ENCODE measurements at regions of chr13 and their contacts with region 1.

Region 1: DNA sequence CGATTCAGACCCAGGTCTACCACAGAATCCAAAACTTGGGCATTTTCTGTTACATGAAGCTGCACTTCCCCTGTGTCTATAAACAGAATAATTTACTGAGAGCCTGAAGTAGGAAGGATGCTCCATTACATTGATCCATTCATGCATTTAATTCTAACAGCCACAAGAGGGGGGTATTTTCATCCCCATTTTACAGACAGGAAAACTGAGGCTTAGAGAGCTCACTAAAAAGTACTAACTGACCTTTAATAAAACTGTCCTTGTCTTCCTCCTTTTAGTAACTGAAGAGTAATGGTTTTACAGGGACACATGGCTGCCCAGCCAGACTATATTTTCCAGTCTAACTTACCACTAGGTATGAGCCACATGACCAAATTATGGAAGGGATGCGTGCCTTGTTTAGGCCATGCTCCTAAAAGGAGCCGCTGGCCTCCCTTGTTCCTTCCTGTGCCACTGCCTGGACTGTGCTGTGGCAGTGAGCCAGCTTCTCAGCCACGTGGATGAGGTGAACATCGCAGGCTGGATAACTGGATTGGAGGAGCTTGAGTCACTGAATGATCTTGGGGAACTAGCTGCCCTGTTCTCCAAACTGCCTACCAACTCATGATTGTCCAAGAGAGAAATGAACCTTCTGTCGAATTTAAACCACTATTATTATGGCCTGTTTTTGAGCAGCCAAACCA is 108.3 kb downstream of the DOCK9 start:
- DNase-seq: no peak
- H3K4me3 Mint-ChIP-seq: no peak overlapping the region
- H3K27ac Mint-ChIP-seq: no peak overlapping the region
- H3K4me1 Mint-ChIP-seq: peaks cover 21% of the 10 kb centered on the region
- H3K27me3 Mint-ChIP-seq: no peaks in the 10 kb centered on the region

Region 2: GRCh38 chr13:98685146-98685545 is 184.4 kb before region 1 on chr13:
- intact Hi-C with region 1: no loop called
- DNase-seq: no peak
- H3K4me3 Mint-ChIP-seq: no peak overlapping the region
- H3K27ac Mint-ChIP-seq: no peak overlapping the region
- H3K4me1 Mint-ChIP-seq: no peaks in the 10 kb centered on the region
- H3K27me3 Mint-ChIP-seq: peaks cover 15% of the 10 kb centered on the region

Region 3: DNA sequence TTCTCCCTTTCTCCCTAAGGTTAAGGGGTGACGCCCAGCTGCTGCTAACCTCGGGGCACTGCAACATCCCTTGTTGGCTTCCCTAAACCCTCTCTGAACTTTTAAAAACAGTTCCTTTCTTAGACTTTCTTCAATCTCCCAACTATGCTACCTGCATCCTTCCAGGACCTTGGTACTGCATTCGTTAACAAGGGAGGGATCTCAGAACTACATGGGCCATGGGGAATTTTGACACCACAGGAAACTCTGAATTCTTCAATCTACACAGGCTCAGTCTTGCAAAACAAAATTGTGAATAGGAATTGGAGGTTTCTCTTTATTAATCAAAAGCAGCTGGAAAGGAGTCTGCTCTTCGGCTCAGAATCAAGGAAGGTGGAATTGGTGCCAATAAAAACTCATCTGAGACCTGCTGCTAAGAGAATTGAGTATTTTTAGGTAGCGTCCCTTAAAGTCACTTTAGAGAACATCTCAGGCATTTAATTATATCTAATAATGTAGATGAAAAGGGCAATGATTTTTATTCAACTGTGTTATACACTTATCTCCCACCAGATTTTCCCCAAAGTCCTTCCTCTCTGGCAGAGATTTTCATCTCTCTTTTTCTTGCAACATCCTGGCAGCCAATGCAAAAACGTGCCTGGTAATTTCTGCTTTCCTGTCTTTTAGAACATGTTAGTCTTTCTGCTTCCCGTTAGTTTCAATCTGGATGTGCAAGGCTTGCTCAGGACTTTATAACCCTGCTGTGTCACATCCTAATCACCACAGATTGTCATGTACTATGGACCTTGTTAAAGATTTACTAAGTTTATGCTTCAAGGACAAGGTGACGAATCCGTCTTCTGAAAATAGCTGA is 48.0 kb before region 1 on chr13:
- intact Hi-C with region 1: no loop called
- DNase-seq: no peak
- H3K4me3 Mint-ChIP-seq: no peak overlapping the region
- H3K27ac Mint-ChIP-seq: no peak overlapping the region
- H3K4me1 Mint-ChIP-seq: peaks cover 7% of the 10 kb centered on the region
- H3K27me3 Mint-ChIP-seq: no peaks in the 10 kb centered on the region

Region 4: GRCh38 chr13:99264051-99264450 is 394.5 kb after region 1 on chr13:
- intact Hi-C with region 1: loop called (anchors 5 kb)
- DNase-seq: no peak
- H3K4me3 Mint-ChIP-seq: no peak overlapping the region
- H3K27ac Mint-ChIP-seq: no peak overlapping the region
- H3K4me1 Mint-ChIP-seq: peaks cover 57% of the 10 kb centered on the region
- H3K27me3 Mint-ChIP-seq: no peaks in the 10 kb centered on the region